Activated B cell treated with CpG ODN at 0.5 μM for 24 hours (primary cell): ENCODE measurements at regions of chr21 and their contacts with region 1.

Region 1: GRCh38 chr21:25881525-25882376 is 147.0 kb downstream of the GABPA start:
- DNase-seq: peak; percentile 39
- ATAC-seq: peak; percentile 87
- H3K4me3 Mint-ChIP-seq: no peak overlapping the region
- H3K27ac Mint-ChIP-seq: no peak overlapping the region
- H3K4me1 Mint-ChIP-seq: no peaks in the 10 kb centered on the region
- H3K27me3 Mint-ChIP-seq: no peaks in the 10 kb centered on the region
- CTCF ChIP-seq: peak; percentile 33

Region 2: GRCh38 chr21:25999921-26000582 is 118.3 kb after region 1 on chr21:
- CTCF ChIA-PET with region 1: no interaction called
- POLR2A ChIA-PET with region 1: no interaction called
- intact Hi-C with region 1: loop called (anchors 1 kb)
- DNase-seq: no peak
- ATAC-seq: no peak
- H3K4me3 Mint-ChIP-seq: peak overlapping the region; percentile 7
- H3K27ac Mint-ChIP-seq: no peak overlapping the region
- H3K4me1 Mint-ChIP-seq: peaks cover 4% of the 10 kb centered on the region
- H3K27me3 Mint-ChIP-seq: no peaks in the 10 kb centered on the region
- CTCF ChIP-seq: no peak

Region 3: GRCh38 chr21:26715878-26716506 is 834.2 kb after region 1 on chr21:
- CTCF ChIA-PET with region 1: interaction called, 37 read pairs
- POLR2A ChIA-PET with region 1: no interaction called
- intact Hi-C with region 1: loop called (anchors 1 kb)
- DNase-seq: no peak
- ATAC-seq: no peak
- H3K4me3 Mint-ChIP-seq: no peak overlapping the region
- H3K27ac Mint-ChIP-seq: no peak overlapping the region
- H3K4me1 Mint-ChIP-seq: no peaks in the 10 kb centered on the region
- H3K27me3 Mint-ChIP-seq: peaks cover 3% of the 10 kb centered on the region
- CTCF ChIP-seq: no peak

Region 4: GRCh38 chr21:27700974-27701614 is 1819.3 kb after region 1 on chr21:
- CTCF ChIA-PET with region 1: no interaction called
- POLR2A ChIA-PET with region 1: no interaction called
- intact Hi-C with region 1: loop called (anchors 5 kb)
- DNase-seq: no peak
- ATAC-seq: no peak
- H3K4me3 Mint-ChIP-seq: no peak overlapping the region
- H3K27ac Mint-ChIP-seq: no peak overlapping the region
- H3K4me1 Mint-ChIP-seq: no peaks in the 10 kb centered on the region
- H3K27me3 Mint-ChIP-seq: no peaks in the 10 kb centered on the region
- CTCF ChIP-seq: no peak